Right ventricle myocardium inferior (tissue), 1 donor: ENCODE measurements at regions of chr13 and their contacts with region 1.

Region 1: DNA sequence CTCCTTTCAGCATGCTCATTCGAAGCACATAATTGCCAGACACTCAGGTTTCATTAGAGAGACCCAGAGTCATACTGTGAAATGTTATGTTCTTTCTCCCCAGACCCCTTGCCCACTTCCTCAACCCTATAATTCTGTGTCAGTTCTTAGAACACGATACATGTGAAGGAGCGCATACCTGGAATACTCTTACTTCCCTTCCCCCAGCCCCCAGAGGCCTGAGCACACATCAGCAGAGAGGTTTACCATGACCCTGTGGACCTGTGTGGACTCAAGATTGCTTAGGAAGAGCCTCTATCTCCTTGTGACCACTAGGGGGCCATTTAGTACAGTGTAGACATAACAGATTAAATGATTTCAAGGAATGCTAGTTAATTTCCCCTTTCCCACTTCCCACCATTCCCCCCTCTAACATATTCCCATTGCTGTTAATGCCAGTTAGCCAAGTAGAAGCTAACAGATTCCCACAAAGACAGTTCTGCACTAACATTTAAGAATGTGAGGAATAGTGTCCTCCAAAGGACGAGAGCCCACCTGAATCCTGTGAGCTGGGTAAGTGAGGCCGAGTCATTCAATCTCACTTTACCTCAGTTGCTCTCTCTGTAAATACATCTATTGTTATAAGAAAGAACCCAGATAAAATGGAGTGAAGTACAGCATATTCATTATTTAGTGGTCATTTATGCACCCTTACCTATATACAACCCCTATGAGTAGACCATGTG is 154.2 kb upstream of the MAB21L1 start:
- DNase-seq: no peak
- ATAC-seq: peak; percentile 84

Region 2: DNA sequence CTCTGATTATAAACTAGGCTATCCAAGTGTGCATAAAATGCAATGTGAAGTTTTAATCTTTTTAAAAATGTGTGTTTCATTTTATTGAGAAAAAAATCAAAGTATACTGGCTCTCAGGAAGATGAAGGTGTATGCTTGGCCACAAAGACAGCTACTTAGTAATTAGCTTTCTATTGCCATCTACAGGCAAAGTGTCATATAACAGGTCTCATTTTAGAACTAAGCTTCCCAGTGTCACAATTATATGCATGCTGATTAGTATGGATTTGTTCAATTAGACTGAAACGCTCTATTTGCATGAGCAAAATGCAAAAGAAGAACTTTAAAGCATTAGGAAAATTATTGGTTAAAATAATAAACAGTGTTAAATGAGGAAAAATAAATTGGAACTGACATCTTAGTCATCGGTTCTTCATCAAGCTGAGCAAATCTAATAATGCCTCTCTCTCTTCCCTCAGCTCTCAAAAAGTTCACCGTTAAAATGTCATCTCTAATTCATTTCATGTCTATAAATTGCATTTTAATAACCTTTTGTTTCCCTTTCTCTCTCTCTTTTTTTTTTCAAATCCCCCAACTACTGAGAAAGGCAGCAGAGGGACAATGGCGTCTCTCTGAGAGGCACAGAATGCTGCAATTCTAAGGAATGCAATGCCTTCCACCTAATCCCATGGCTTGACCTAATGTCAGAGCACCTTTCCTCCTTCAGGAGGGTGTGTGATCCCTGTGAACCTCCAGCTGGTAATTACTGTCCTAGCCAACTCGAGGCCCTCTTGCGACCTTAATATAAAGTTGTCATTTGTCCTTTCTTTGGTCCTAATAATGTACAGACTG is 158.8 kb after region 1 on chr13:
- intact Hi-C with region 1: loop called (anchors 5 kb)
- DNase-seq: no peak
- ATAC-seq: peak; percentile 35